OCI-LY7 (cell line): ENCODE measurements at regions of chr3 and their contacts with region 1.

Region 1: GRCh38 chr3:75294124-75294523 is 370.0 kb upstream of the FRG2C start:
- DNase-seq: no peak
- H3K4me3 ChIP-seq: no peak overlapping the region
- H3K27ac ChIP-seq: no peak overlapping the region
- H3K4me1 ChIP-seq: no peaks in the 10 kb centered on the region
- CTCF ChIP-seq: peak; percentile 52

Region 2: GRCh38 chr3:74711913-74712512 is 582.1 kb before region 1 on chr3:
- CTCF ChIA-PET with region 1: no interaction called
- POLR2A ChIA-PET with region 1: no interaction called
- intact Hi-C with region 1: no loop called
- DNase-seq: no peak
- H3K4me3 ChIP-seq: no peak overlapping the region
- H3K27ac ChIP-seq: no peak overlapping the region
- H3K4me1 ChIP-seq: no peaks in the 10 kb centered on the region
- CTCF ChIP-seq: no peak

Region 3: GRCh38 chr3:75262661-75263060 is 31.5 kb before region 1 on chr3:
- CTCF ChIA-PET with region 1: no interaction called
- POLR2A ChIA-PET with region 1: no interaction called
- intact Hi-C with region 1: no loop called
- DNase-seq: no peak
- H3K4me3 ChIP-seq: no peak overlapping the region
- H3K27ac ChIP-seq: no peak overlapping the region
- H3K4me1 ChIP-seq: no peaks in the 10 kb centered on the region
- CTCF ChIP-seq: no peak

Region 4: GRCh38 chr3:75305901-75306300 is 11.8 kb after region 1 on chr3:
- CTCF ChIA-PET with region 1: no interaction called
- POLR2A ChIA-PET with region 1: no interaction called
- intact Hi-C with region 1: no loop called
- DNase-seq: no peak
- H3K4me3 ChIP-seq: no peak overlapping the region
- H3K27ac ChIP-seq: no peak overlapping the region
- H3K4me1 ChIP-seq: no peaks in the 10 kb centered on the region
- CTCF ChIP-seq: no peak

Region 5: DNA sequence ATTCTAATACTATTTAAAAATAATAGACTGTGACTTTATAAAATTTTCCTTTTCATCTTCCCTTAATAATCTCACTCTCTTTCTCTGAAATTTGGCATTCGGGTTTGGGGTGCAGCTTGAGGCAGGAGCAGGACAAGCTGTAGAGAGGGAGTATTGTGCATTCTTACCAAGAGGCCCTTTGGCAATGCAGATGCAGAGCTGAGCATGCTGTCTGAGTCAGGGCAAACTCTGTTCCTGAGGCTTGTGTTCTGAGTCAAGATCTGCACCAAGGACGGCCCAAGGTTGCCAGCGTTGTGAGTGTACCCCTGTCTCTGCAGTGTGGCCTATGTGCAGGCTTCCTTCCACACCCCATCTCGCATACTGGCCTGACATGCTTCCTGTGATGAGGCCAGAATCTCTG is 26.2 kb after region 1 on chr3:
- CTCF ChIA-PET with region 1: no interaction called
- POLR2A ChIA-PET with region 1: no interaction called
- intact Hi-C with region 1: no loop called
- DNase-seq: no peak
- H3K4me3 ChIP-seq: no peak overlapping the region
- H3K27ac ChIP-seq: no peak overlapping the region
- H3K4me1 ChIP-seq: no peaks in the 10 kb centered on the region
- CTCF ChIP-seq: no peak

Region 6: GRCh38 chr3:75332794-75333193 is 38.7 kb after region 1 on chr3:
- CTCF ChIA-PET with region 1: interaction called, 17 read pairs
- POLR2A ChIA-PET with region 1: no interaction called
- intact Hi-C with region 1: no loop called
- DNase-seq: no peak
- H3K4me3 ChIP-seq: no peak overlapping the region
- H3K27ac ChIP-seq: no peak overlapping the region
- H3K4me1 ChIP-seq: no peaks in the 10 kb centered on the region
- CTCF ChIP-seq: no peak